Caco-2 (cell line): ENCODE measurements at regions of chr10 and their contacts with region 1.

Region 1: GRCh38 chr10:43461950-43462349 is 25.0 kb downstream of the ZNF487 start:
- DNase-seq: peak; percentile 36 to 80
- H3K4me3 ChIP-seq: no peak overlapping the region
- H3K4me3 Mint-ChIP-seq: no peak overlapping the region
- H3K27ac Mint-ChIP-seq: no peak overlapping the region
- H3K4me1 ChIP-seq: no peaks in the 10 kb centered on the region
- H3K4me1 Mint-ChIP-seq: peaks cover 7% of the 10 kb centered on the region
- H3K27me3 ChIP-seq: no peaks in the 10 kb centered on the region
- H3K27me3 Mint-ChIP-seq: no peaks in the 10 kb centered on the region
- CTCF ChIP-seq: peak; percentile 79 to 82

Region 2: GRCh38 chr10:43105102-43105785 is 356.7 kb before region 1 on chr10:
- CTCF ChIA-PET with region 1: no interaction called
- POLR2A ChIA-PET with region 1: no interaction called
- intact Hi-C with region 1: loop called (anchors 5 kb)
- DNase-seq: peak; percentile 80 to 91
- H3K4me3 ChIP-seq: peak overlapping the region; percentile 48
- H3K4me3 Mint-ChIP-seq: peak overlapping the region; percentile 68
- H3K27ac Mint-ChIP-seq: no peak overlapping the region
- H3K4me1 ChIP-seq: no peaks in the 10 kb centered on the region
- H3K4me1 Mint-ChIP-seq: no peaks in the 10 kb centered on the region
- H3K27me3 ChIP-seq: peaks cover 3% of the 10 kb centered on the region
- H3K27me3 Mint-ChIP-seq: peaks cover 18% of the 10 kb centered on the region
- CTCF ChIP-seq: peak; percentile 99

Region 3: DNA sequence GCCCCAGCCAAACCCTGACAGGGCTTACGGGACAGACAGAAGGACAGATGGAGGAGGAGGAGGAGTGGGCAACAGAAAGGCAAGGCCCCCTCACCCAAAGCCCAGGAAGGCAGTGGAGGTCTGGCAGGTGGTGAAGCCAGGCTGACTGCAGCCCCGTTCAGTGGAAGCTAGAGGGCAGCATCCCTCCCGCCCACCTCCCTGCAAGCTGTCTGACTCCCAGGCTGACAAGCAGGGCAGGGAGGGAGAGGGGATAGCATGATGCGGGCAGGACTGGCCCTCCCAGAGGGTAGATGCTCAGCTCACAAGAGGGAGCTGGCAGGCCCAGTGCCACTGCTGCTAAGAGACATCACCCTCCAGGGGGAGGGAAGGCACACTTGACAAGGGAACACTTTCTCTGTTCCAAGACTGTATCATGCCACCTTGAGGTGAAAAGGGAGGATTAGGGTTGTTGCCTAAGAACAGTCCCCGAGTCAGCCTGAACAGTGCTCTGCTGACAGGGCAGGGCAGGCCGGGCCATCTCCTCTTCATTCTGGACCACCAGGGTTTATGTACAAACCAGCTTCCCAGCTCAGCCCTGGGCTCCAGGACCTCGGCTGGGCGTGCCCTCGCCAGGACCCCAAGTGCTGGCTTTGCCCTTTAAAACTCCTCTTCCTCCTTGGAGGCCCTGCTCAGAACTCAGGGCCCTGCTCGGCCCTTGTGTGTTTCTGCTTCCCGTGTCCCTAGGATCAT is 256.8 kb before region 1 on chr10:
- CTCF ChIA-PET with region 1: no interaction called
- POLR2A ChIA-PET with region 1: no interaction called
- intact Hi-C with region 1: loop called (anchors 5 kb)
- DNase-seq: peak; percentile 65 to 68
- H3K4me3 ChIP-seq: no peak overlapping the region
- H3K4me3 Mint-ChIP-seq: no peak overlapping the region
- H3K27ac Mint-ChIP-seq: no peak overlapping the region
- H3K4me1 ChIP-seq: no peaks in the 10 kb centered on the region
- H3K4me1 Mint-ChIP-seq: no peaks in the 10 kb centered on the region
- H3K27me3 ChIP-seq: no peaks in the 10 kb centered on the region
- H3K27me3 Mint-ChIP-seq: no peaks in the 10 kb centered on the region
- CTCF ChIP-seq: peak; percentile 78 to 88

Region 4: DNA sequence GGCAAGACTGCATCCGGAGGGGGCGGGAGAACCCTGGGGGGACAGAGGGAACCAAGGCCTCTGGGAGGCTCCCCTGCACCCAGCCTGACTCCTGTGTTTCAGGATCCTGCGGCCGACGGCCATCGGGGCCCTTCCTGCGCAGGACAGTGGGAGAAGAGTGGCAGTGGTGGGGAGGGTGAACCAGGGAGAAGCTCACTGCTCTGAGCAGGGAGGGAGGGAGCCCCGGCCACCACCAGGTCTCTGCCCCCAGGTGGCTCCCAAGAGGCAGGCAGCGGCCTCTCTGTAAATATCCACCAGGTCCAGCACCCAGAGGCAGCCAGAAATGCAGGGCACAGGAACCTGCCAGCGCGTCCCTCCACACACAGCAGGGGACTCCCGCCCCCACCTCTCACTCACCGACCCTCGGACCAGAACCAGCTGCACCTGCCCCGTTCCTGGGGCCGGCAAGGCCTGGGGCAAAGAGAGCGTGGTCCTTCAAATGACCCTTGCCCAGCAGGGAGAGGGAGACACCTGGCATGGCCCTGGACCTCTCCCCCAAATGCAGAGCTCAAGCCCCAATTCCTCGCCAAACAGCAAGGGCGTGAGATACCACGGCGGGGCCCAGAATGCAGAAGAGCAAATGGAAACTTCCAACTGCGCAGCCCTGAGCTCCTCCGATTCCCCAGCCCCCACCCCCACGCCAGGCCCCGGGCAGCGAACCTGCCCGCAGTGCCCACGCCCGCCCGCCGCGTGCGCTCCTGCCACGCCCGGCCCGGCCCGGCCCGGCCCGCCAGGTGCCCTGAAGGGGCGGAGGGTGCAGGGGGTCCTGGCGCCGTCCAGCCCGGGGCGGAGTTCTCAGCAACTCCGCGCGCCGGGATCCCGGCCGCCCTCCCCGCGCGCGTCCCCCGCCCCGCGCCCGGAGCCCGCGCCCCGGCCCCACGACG is 195.9 kb before region 1 on chr10:
- CTCF ChIA-PET with region 1: no interaction called
- POLR2A ChIA-PET with region 1: no interaction called
- intact Hi-C with region 1: loop called (anchors 1 kb)
- DNase-seq: peak; percentile 80 to 86
- H3K4me3 ChIP-seq: peak overlapping the region; percentile 43
- H3K4me3 Mint-ChIP-seq: peak overlapping the region; percentile 73
- H3K27ac Mint-ChIP-seq: no peak overlapping the region
- H3K4me1 ChIP-seq: no peaks in the 10 kb centered on the region
- H3K4me1 Mint-ChIP-seq: no peaks in the 10 kb centered on the region
- H3K27me3 ChIP-seq: peaks cover 9% of the 10 kb centered on the region
- H3K27me3 Mint-ChIP-seq: peaks cover 32% of the 10 kb centered on the region
- CTCF ChIP-seq: peak; percentile 83 to 88

Region 5: DNA sequence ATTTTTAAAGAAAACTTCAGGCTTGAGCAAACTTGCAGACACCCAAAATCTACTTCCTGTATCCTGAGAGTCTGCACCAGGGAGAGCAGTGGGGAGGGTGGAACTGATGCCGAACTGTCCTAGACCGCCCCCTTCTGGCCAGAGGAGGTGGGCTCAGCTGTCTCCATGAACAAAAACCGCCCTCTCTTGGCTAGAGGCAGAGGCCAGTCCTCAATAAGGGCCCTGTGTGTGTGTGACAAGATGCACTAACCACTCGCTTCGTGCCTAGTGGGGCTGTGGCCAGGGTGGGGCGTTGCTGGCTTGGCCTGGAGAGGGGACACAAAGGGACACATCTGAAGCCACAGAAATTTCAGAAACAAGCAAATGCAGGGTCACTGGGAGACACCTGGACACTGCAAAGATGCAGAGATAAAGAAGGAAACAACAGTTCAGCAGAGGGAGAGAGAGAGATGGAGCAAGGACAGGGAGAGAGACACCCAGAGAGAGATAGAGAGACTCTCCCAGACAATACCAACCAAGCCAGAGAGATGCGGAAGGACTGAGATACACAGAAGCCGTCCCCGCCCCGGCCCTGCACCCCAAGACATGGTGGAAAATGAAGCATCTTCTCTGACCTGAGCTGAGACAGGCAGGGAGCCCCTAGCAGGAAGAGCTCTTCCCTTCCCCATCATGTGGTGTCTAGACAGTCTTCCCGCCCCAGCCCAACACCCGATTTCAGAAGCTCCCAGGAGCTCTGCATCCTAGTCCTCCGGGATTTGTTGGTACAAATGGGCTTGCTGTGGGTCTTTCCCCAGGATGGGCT is 113.2 kb before region 1 on chr10:
- CTCF ChIA-PET with region 1: no interaction called
- POLR2A ChIA-PET with region 1: no interaction called
- intact Hi-C with region 1: loop called (anchors 1 kb)
- DNase-seq: peak; percentile 91 to 95
- H3K4me3 ChIP-seq: no peak overlapping the region
- H3K4me3 Mint-ChIP-seq: no peak overlapping the region
- H3K27ac Mint-ChIP-seq: peak overlapping the region; percentile 1
- H3K4me1 ChIP-seq: peaks cover 11% of the 10 kb centered on the region
- H3K4me1 Mint-ChIP-seq: peaks cover 10% of the 10 kb centered on the region
- H3K27me3 ChIP-seq: no peaks in the 10 kb centered on the region
- H3K27me3 Mint-ChIP-seq: no peaks in the 10 kb centered on the region
- CTCF ChIP-seq: peak; percentile 99 to 100

Region 6: GRCh38 chr10:43407576-43408330 is 54.2 kb before region 1 on chr10:
- CTCF ChIA-PET with region 1: no interaction called
- POLR2A ChIA-PET with region 1: interaction called, 11 read pairs
- intact Hi-C with region 1: loop called (anchors 1 kb)
- DNase-seq: peak; percentile 94 to 95
- H3K4me3 ChIP-seq: peak overlapping the region; percentile 70
- H3K4me3 Mint-ChIP-seq: peak overlapping the region; percentile 81
- H3K27ac Mint-ChIP-seq: peak overlapping the region; percentile 94
- H3K4me1 ChIP-seq: peaks cover 40% of the 10 kb centered on the region
- H3K4me1 Mint-ChIP-seq: peaks cover 32% of the 10 kb centered on the region
- H3K27me3 ChIP-seq: no peaks in the 10 kb centered on the region
- H3K27me3 Mint-ChIP-seq: no peaks in the 10 kb centered on the region
- CTCF ChIP-seq: peak; percentile 54 to 73